ENCODE measurements at regions of chr14 and their contacts with region 1.

Region 1: DNA sequence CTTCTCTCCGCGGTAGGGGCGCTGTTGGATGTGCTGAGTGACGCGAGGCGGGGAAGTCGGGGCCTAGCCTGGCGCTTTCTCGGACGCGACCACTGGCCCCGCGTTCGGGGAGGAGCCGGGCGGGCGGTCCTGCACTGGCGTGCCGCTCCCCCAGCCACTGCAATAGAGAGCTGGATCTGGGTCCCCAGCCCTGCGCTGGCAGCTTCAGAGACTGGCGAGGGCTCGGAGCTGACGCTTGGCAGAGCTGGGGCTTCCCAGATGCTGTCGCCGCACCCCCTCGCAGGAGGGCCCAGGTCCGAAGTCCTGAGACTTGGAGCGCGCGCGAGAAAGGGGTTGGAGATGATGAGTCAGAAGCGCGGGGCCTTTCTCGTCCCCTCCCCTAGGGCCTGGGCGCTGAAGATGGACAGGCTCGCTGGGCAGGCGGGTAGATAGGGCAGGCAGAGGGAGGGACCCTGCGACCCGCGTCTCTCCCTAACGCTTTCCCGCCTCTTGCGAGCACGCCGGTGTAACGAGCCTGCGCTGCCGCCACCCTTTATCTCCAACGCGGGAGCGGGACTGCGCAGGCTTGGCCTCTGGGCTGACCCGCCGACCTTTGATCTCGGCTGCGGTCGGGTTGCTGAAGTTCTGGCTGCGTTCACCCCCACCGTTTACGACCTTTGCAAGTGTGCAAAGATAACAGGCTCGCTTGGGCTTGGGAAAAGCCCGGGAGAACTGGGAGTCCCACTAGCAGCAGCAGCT is 3.0 kb downstream of the TMEM253 start:
- DNase-seq: peak; percentile 96
- H3K4me3 Mint-ChIP-seq: peak overlapping the region; percentile 88
- H3K27ac Mint-ChIP-seq: peak overlapping the region; percentile 78
- H3K4me1 Mint-ChIP-seq: peaks cover 50% of the 10 kb centered on the region
- H3K27me3 Mint-ChIP-seq: peaks cover 10% of the 10 kb centered on the region

Region 2: DNA sequence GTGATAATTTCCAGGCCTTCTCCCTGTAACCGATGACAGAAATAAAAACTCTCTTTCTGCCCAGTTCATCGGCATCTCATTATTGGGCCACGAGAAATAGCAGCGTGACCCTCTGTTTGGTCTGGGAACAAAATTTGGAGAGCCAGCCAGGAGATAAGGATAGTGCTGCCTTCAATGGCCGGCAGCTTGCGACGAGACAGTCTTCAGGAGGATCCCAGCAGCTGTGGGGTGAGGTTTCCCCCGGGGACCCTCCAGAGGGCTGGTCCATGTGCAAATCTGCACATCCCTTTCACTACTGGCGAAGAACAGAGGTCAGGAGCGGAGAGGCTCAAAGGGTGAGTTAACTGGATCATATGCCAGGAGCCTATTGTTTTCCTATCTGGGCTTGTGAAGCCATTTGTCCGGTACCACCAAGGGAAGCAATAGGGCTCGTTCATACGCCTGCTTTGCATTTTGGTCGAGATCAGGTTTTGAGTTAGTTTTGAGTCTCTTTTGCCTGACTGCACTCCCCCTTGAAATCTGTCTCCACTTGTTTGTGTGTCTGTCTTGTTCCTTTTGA is 100.0 kb before region 1 on chr14:
- CTCF ChIA-PET with region 1: interaction called, 12 read pairs
- POLR2A ChIA-PET with region 1: interaction called, 4 read pairs
- DNase-seq: no peak
- H3K4me3 Mint-ChIP-seq: no peak overlapping the region
- H3K27ac Mint-ChIP-seq: no peak overlapping the region
- H3K4me1 Mint-ChIP-seq: peaks cover 2% of the 10 kb centered on the region
- H3K27me3 Mint-ChIP-seq: no peaks in the 10 kb centered on the region

Region 3: GRCh38 chr14:21071225-21072030 is 32.5 kb before region 1 on chr14:
- CTCF ChIA-PET with region 1: interaction called, 52 read pairs
- POLR2A ChIA-PET with region 1: interaction called, 16 read pairs
- DNase-seq: peak; percentile 66
- H3K4me3 Mint-ChIP-seq: peak overlapping the region; percentile 65
- H3K27ac Mint-ChIP-seq: no peak overlapping the region
- H3K4me1 Mint-ChIP-seq: peaks cover 39% of the 10 kb centered on the region
- H3K27me3 Mint-ChIP-seq: peaks cover 67% of the 10 kb centered on the region

Measured in activated CD4-positive, alpha-beta memory T cell treated with anti-CD3 and anti-CD28 coated beads, Interleukin-2, amount 10 ng/mL, durations not matched to agents 7 days and 5 days (primary cell).